Activated T-helper 2 cell treated with anti-CD3 and anti-CD28 coated beads, Interferon-gamma antibody, Interleukin-2, Interleukin-4, amounts not matched to agents 10 μg/mL and 5 μg/mL and 100 μg/mL, durations not matched to agents 14 hours and 24 hours and 36 hours (primary cell): ENCODE measurements at regions of chr7 and their contacts with region 1.

Region 1: GRCh38 chr7:35424869-35425495 is 171.1 kb upstream of the TBX20 start:
- DNase-seq: peak; percentile 25
- H3K4me3 Mint-ChIP-seq: no peak overlapping the region
- H3K27ac Mint-ChIP-seq: no peak overlapping the region
- H3K4me1 Mint-ChIP-seq: peaks cover 1% of the 10 kb centered on the region
- H3K27me3 Mint-ChIP-seq: peaks cover 10% of the 10 kb centered on the region

Region 2: GRCh38 chr7:35519971-35520809 is 95.2 kb after region 1 on chr7:
- intact Hi-C with region 1: loop called (anchors 5 kb)
- DNase-seq: peak; percentile 34
- H3K4me3 Mint-ChIP-seq: no peak overlapping the region
- H3K27ac Mint-ChIP-seq: no peak overlapping the region
- H3K4me1 Mint-ChIP-seq: peaks cover 4% of the 10 kb centered on the region
- H3K27me3 Mint-ChIP-seq: peaks cover 16% of the 10 kb centered on the region

Region 3: GRCh38 chr7:35537067-35538023 is 112.4 kb after region 1 on chr7:
- intact Hi-C with region 1: loop called (anchors 5 kb)
- DNase-seq: peak; percentile 63
- H3K4me3 Mint-ChIP-seq: peak overlapping the region; percentile 60
- H3K27ac Mint-ChIP-seq: no peak overlapping the region
- H3K4me1 Mint-ChIP-seq: peaks cover 2% of the 10 kb centered on the region
- H3K27me3 Mint-ChIP-seq: peaks cover 18% of the 10 kb centered on the region

Region 4: DNA sequence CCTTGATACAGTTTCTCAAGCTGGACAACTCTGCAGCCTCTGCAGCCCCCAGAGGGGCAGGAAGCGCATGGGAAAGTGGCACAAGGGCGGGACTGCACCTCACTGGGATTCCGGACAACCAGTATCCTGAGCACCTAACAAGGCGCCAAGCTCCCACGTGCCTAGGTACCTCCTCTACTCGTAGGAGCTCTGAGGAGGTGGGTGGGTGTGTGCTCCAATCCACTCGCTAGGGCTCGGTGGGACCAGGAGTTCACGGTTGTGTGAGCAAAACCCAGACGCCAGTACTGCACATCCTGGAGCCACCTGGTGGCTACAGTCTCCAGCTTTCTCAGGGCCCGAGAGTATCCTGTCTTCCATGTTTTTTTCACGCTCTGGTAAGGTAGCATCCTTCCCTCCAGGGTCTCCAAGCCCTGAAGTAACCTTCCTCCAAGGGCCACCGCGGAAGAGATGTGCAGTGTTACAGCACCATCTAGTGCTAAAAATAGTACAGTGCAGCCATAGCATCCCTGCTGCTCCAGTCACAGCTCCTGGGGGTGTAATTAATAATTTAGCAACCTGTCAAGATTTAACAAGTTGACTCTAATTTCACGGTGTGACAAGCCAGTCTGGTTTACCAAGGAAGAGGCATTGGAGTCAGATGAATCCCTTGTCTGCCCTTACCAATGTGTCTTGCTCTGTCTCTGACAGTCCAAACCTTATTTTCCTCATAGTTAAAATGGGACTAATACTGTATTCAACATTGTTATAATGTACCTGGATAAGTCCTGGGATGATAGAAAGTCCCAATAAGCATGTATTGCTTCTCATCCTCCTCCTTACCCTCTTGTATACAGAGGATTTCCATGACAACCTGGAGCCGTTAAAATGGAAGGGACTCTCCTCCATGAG is 199.6 kb after region 1 on chr7:
- intact Hi-C with region 1: loop called (anchors 2 kb)
- DNase-seq: no peak
- H3K4me3 Mint-ChIP-seq: no peak overlapping the region
- H3K27ac Mint-ChIP-seq: no peak overlapping the region
- H3K4me1 Mint-ChIP-seq: no peaks in the 10 kb centered on the region
- H3K27me3 Mint-ChIP-seq: peaks cover 8% of the 10 kb centered on the region

Region 5: DNA sequence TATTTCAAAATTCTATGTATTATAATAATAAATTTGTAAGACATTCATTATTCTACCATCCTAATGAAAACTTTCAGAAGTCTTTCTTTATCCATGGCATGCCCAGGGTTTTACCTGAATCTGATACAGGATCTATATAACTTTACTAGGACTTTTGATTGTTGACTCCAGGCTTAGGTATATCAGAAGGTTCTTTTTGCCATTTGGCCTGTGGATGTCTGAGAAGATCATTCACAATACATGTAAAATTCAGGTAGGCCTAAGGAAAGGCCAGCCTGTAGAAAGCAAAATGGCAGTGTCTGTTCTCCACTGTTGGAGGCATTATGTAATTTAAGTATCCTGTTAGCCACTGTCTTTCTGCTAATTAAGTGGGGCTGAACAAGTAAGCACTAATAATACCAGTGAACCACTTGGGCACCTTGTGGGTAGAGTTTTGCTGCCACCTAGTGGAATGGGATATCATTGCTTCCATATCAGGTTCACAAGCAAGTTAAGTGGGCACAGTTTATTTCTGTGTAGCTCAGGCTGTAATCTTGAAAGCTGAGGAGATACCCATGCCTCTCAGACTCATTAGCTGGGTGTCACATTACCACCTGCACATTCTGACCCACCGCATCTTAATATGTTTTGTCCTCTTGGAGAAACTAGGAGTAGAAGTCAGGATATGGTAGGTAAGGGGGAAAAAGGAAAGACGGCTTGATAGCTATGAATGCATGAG is 481.4 kb after region 1 on chr7:
- intact Hi-C with region 1: loop called (anchors 5 kb)
- DNase-seq: peak; percentile 41
- H3K4me3 Mint-ChIP-seq: no peak overlapping the region
- H3K27ac Mint-ChIP-seq: no peak overlapping the region
- H3K4me1 Mint-ChIP-seq: peaks cover 3% of the 10 kb centered on the region
- H3K27me3 Mint-ChIP-seq: no peaks in the 10 kb centered on the region